ENCODE measurements at regions of chr5 and their contacts with region 1.

Region 1: DNA sequence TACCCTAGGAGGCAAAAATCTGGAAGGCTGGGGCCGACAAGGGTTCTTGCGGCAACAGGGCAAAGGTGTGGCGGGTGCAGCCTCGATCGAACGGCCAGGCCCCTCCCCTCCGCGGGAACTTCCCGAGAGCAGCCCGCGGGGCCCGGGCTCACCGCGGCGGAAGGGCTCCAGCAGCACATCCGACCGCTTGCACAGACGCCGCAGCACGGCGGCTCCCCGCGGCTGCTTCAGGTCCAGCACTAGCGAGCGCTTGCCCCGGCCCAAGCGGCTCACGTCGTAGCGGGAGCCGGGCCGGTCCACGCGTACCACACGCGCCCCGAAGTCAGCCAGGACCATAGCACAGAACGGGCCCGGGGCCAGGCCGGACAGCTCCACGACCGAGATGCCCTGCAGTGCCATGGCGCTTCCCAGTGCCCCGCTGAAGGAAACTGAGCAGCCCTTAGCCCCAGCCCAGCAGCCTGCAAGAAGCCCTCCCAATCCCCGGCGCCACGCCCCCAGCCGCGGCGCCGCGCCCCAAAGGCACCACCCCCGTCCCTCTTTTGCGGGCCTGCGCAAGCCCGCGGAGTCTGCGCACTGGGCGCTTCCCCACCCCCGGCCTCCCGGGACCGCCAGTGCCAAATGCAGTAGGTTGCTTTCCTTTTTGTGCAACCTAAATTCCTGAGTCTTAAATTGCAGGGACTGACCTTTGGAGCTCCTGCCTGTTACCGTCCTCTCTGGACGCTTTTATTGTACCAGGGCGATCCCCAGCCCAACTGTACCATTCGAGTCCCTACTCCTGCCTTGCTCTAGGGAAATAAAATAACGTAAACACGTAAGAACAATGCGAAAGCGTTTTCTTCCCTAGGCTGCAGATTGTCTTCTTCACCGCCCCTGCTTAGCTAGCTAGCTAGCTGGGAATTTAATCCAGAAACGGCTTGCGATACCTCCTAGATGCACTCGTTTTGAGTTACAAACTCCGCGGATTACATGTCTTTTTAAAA is at the start of gene AMACR:
- DNase-seq: peak; percentile 90 to 100
- H3K4me3 ChIP-seq: peak within 1 kb of the TSS; percentile 82
- H3K27ac ChIP-seq: peak within 1 kb of the TSS; percentile 50
- H3K4me1 ChIP-seq: peaks cover 26% of the 10 kb centered on the region
- H3K27me3 ChIP-seq: no peaks in the 10 kb centered on the region
- CTCF ChIP-seq: no peak
- total RNA-seq, gene AMACR: 31.1 and 31.2 TPM in 2 replicates

Region 2: DNA sequence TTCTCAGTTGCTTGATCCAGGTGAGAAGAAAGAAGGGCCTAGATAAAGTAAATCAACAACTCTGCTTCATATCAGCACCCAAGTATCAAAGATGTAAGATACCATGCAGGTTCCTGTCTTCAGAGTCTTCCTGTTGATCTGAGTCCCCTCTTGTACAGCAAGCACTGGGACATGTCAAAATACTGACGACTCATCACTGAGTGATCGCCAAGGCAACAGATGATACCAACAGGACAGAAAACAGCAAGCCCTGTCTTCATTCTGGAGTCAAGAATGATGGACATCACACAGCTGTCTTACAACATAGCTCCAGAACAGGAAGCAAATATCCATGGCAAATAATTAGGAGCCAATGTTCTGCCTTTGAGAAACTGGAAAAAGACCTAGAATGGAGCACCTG is 483.4 kb before region 1 on chr5:
- CTCF ChIA-PET with region 1: interaction called, 10 read pairs
- POLR2A ChIA-PET with region 1: no interaction called
- intact Hi-C with region 1: no loop called
- DNase-seq: no peak
- H3K4me3 ChIP-seq: no peak overlapping the region
- H3K27ac ChIP-seq: no peak overlapping the region
- H3K4me1 ChIP-seq: no peaks in the 10 kb centered on the region
- H3K27me3 ChIP-seq: no peaks in the 10 kb centered on the region
- CTCF ChIP-seq: no peak

Region 3: DNA sequence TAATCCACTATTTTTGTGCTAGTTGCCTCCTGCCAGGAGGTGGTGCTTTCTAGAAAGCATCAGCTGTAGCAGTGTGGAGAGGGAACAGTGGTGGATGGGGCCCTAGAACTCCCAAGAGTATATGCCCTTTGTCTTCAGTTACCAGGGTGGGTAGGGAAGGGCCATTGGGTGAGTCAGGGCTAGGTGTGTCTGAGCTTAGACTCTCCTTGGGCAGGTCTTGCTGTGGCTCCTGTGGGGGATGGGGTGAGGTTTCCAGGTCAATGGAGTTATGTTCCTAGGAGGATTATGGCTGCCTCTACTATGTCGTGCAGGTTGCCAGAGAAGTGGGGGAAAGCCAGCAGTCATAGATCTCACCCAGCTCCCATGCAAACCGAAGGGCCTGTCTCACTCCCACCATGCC is 104.8 kb before region 1 on chr5:
- CTCF ChIA-PET with region 1: no interaction called
- POLR2A ChIA-PET with region 1: no interaction called
- intact Hi-C with region 1: no loop called
- DNase-seq: peak; percentile 92 to 94
- H3K4me3 ChIP-seq: peak overlapping the region; percentile 22; the same call in 1 of the 2 replicates
- H3K27ac ChIP-seq: peak overlapping the region; percentile 72
- H3K4me1 ChIP-seq: peaks cover 36% of the 10 kb centered on the region
- H3K27me3 ChIP-seq: no peaks in the 10 kb centered on the region
- CTCF ChIP-seq: no peak; the same call in 1 of the 2 replicates

Region 4: GRCh38 chr5:34022121-34022705 is 14.3 kb after region 1 on chr5:
- CTCF ChIA-PET with region 1: no interaction called
- POLR2A ChIA-PET with region 1: no interaction called
- intact Hi-C with region 1: no loop called
- DNase-seq: no peak
- H3K4me3 ChIP-seq: no peak overlapping the region
- H3K27ac ChIP-seq: no peak overlapping the region
- H3K4me1 ChIP-seq: no peaks in the 10 kb centered on the region
- H3K27me3 ChIP-seq: no peaks in the 10 kb centered on the region
- CTCF ChIP-seq: no peak

Measured in PC-9 (cell line).